Colonic mucosa (tissue), 4 donors: ENCODE measurements at regions of chr20 and their contacts with region 1.

Region 1: GRCh38 chr20:38221119-38221589 is 39.4 kb downstream of the KIAA1755 start:
- DNase-seq: peak; percentile 65
- H3K4me3 ChIP-seq: no peak overlapping the region
- H3K27ac ChIP-seq: no peak overlapping the region
- H3K4me1 ChIP-seq: no peaks in the 10 kb centered on the region
- H3K27me3 ChIP-seq: no peaks in the 10 kb centered on the region
- CTCF ChIP-seq: peak; percentile 86

Region 2: GRCh38 chr20:37564388-37565133 is 656.6 kb before region 1 on chr20:
- intact Hi-C with region 1: loop called (anchors 5 kb)
- DNase-seq: peak; percentile 34
- H3K4me3 ChIP-seq: no peak overlapping the region
- H3K27ac ChIP-seq: no peak overlapping the region
- H3K4me1 ChIP-seq: no peaks in the 10 kb centered on the region
- H3K27me3 ChIP-seq: peaks cover 10% of the 10 kb centered on the region
- CTCF ChIP-seq: peak; percentile 86

Region 3: GRCh38 chr20:37896932-37897548 is 324.1 kb before region 1 on chr20:
- intact Hi-C with region 1: loop called (anchors 10 kb)
- DNase-seq: no peak
- H3K4me3 ChIP-seq: no peak overlapping the region
- H3K27ac ChIP-seq: no peak overlapping the region
- H3K4me1 ChIP-seq: no peaks in the 10 kb centered on the region
- H3K27me3 ChIP-seq: peaks cover 5% of the 10 kb centered on the region
- CTCF ChIP-seq: no peak

Region 4: GRCh38 chr20:38057351-38057972 is 163.7 kb before region 1 on chr20:
- intact Hi-C with region 1: loop called (anchors 2 kb)
- DNase-seq: peak; percentile 84
- H3K4me3 ChIP-seq: no peak overlapping the region
- H3K27ac ChIP-seq: no peak overlapping the region
- H3K4me1 ChIP-seq: peaks cover 4% of the 10 kb centered on the region
- H3K27me3 ChIP-seq: no peaks in the 10 kb centered on the region
- CTCF ChIP-seq: peak; percentile 87

Region 5: GRCh38 chr20:38073307-38074071 is 147.7 kb before region 1 on chr20:
- intact Hi-C with region 1: loop called (anchors 5 kb)
- DNase-seq: peak; percentile 74
- H3K4me3 ChIP-seq: no peak overlapping the region
- H3K27ac ChIP-seq: peak overlapping the region; percentile 49
- H3K4me1 ChIP-seq: no peaks in the 10 kb centered on the region
- H3K27me3 ChIP-seq: no peaks in the 10 kb centered on the region
- CTCF ChIP-seq: peak; percentile 74

Region 6: GRCh38 chr20:38165089-38165989 is 55.8 kb before region 1 on chr20 and contains the start of gene TGM2:
- intact Hi-C with region 1: loop called (anchors 5 kb)
- DNase-seq: peak; percentile 75
- H3K4me3 ChIP-seq: peak within 1 kb of the TSS; percentile 41
- H3K27ac ChIP-seq: peak within 1 kb of the TSS; percentile 44
- H3K4me1 ChIP-seq: no peaks in the 10 kb centered on the region
- H3K27me3 ChIP-seq: no peaks in the 10 kb centered on the region
- CTCF ChIP-seq: peak; percentile 86
- total RNA-seq, gene TGM2: 14.5 to 32.8 TPM